Endothelial cell of umbilical vein (primary cell): ENCODE measurements at regions of chr6 and their contacts with region 1.

Region 1: DNA sequence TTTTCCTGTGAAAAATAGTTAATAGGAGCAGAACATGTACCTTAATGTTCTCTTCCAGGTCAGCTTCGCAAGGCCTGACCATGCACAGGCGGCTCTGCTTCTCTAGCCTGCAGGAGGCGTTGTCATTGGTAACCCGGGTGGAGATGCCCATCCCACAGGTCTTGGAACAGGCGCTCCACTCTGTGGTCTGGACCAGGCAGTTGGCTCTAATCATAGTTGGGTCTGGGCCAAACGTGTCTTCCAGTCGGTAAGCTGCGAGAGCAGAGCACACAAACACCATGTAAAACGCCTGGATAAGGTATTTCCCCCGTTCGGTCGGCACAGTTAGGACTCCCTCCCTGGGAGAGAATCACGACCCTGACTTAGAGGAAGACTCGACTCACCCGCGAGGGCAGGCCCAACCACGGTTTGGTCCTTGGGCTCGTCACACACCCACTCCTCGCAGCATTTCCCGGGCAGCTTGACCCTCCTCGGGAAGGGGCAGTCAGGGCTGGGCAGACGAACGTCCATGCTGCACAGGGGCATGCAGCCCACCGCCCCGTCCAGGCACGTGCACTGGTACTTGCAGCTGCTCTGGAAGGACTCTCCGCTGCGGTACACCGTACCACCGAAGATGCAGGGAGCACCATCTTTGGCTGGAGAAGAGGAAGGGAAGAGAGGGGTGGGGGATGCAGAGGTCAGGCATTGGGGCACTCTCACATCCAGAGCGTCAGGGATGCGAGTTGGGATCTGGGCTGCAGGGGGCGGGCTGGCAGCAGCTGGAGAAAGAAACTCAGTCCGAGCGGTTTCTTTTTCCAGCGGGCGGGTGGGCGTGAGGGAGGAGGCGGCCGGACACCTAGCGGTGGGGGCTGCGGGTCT is 1.0 kb downstream of the CCN2 start:
- DNase-seq: peak; percentile 55
- H3K4me3 ChIP-seq: peak overlapping the region; percentile 10 to 93 (median 88)
- H3K27ac ChIP-seq: peak overlapping the region; percentile 69
- H3K4me1 ChIP-seq: peaks cover 35% of the 10 kb centered on the region
- H3K27me3 ChIP-seq: no peaks in the 10 kb centered on the region
- CTCF ChIP-seq: peak; percentile 5 to 37
- POLR2A ChIP-seq: peak; percentile 94

Region 2: GRCh38 chr6:131960371-131961133 is 10.4 kb after region 1 on chr6:
- CTCF ChIA-PET with region 1: interaction called, 12 read pairs
- POLR2A ChIA-PET with region 1: interaction called, 6 read pairs
- dilution Hi-C with region 1: no loop called
- intact Hi-C with region 1: no loop called
- DNase-seq: peak; percentile 76
- H3K4me3 ChIP-seq: no peak overlapping the region
- H3K27ac ChIP-seq: peak overlapping the region; percentile 19
- H3K4me1 ChIP-seq: peaks cover 11% of the 10 kb centered on the region
- H3K27me3 ChIP-seq: no peaks in the 10 kb centered on the region
- CTCF ChIP-seq: peak in 1 of 2 donors; percentile 12
- POLR2A ChIP-seq: no peak

Region 3: GRCh38 chr6:131979515-131980337 is 29.6 kb after region 1 on chr6:
- CTCF ChIA-PET with region 1: interaction called, 8 read pairs
- POLR2A ChIA-PET with region 1: interaction called, 34 read pairs
- dilution Hi-C with region 1: no loop called
- intact Hi-C with region 1: loop called (anchors 1 kb)
- DNase-seq: peak; percentile 95
- H3K4me3 ChIP-seq: no peak overlapping the region
- H3K27ac ChIP-seq: peak overlapping the region; percentile 74
- H3K4me1 ChIP-seq: peaks cover 37% of the 10 kb centered on the region
- H3K27me3 ChIP-seq: no peaks in the 10 kb centered on the region
- CTCF ChIP-seq: no peak
- POLR2A ChIP-seq: no peak

Region 4: DNA sequence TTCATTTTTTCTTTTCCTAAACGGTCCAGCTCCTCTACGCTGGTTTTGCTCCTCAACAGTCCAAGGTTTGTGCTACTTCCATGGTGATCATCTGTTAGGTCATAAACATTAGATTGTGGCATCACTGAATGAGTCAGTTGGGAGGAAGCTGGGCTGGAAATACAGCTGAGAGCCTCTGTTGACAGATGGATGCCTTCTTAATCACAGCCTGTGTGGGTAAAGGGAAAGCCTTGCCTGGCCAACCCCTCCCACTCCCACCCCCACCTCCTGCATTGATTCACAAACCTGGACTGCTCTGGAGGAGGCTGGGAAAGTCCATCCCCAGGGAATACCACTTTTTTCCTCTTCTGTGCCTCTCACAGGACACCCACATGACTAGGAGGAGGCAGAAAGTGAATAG is 181.6 kb after region 1 on chr6:
- CTCF ChIA-PET with region 1: interaction called, 14 read pairs
- POLR2A ChIA-PET with region 1: interaction called, 200 read pairs
- dilution Hi-C with region 1: no loop called
- intact Hi-C with region 1: loop called (anchors 1 kb)
- DNase-seq: peak; percentile 99
- H3K4me3 ChIP-seq: peak overlapping the region in 1 of 3 experiments; percentile 95
- H3K27ac ChIP-seq: peak overlapping the region; percentile 100
- H3K4me1 ChIP-seq: peaks cover 54% of the 10 kb centered on the region
- H3K27me3 ChIP-seq: no peaks in the 10 kb centered on the region
- CTCF ChIP-seq: no peak
- POLR2A ChIP-seq: no peak

Region 5: GRCh38 chr6:132161283-132161682 is 211.1 kb after region 1 on chr6:
- CTCF ChIA-PET with region 1: interaction called, 4 read pairs
- POLR2A ChIA-PET with region 1: interaction called, 8 read pairs
- dilution Hi-C with region 1: no loop called
- intact Hi-C with region 1: loop called (anchors 1 kb)
- DNase-seq: peak; percentile 70
- H3K4me3 ChIP-seq: no peak overlapping the region
- H3K27ac ChIP-seq: peak overlapping the region; percentile 5
- H3K4me1 ChIP-seq: peaks cover 7% of the 10 kb centered on the region
- H3K27me3 ChIP-seq: no peaks in the 10 kb centered on the region
- CTCF ChIP-seq: peak; percentile 34 to 41
- POLR2A ChIP-seq: no peak

Region 6: DNA sequence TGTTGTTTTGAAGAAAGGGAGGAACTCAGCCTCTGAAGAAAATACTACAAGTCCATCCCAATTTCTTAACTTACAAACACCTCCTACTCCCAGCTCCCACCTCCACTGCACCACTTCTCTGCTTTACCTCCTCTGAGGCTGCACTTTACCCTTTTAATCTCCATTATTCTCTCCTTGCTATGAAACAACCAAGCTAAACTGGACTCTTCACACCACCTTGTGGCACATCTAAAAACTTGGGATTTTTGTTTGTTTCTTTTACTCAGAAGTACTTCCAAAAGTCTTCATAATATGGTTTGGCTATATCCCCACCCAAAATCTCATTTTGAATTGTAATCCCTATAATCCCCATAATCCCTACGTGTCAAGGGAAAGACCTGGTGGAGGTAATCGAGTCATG is 308.9 kb after region 1 on chr6:
- CTCF ChIA-PET with region 1: interaction called, 15 read pairs
- POLR2A ChIA-PET with region 1: interaction called, 3 read pairs
- dilution Hi-C with region 1: no loop called
- intact Hi-C with region 1: no loop called
- DNase-seq: peak; percentile 60
- H3K4me3 ChIP-seq: no peak overlapping the region
- H3K27ac ChIP-seq: no peak overlapping the region
- H3K4me1 ChIP-seq: no peaks in the 10 kb centered on the region
- H3K27me3 ChIP-seq: no peaks in the 10 kb centered on the region
- CTCF ChIP-seq: peak; percentile 35 to 36
- POLR2A ChIP-seq: no peak